HepG2 (cell line): ENCODE measurements at regions of chr22 and their contacts with region 1.

Region 1: DNA sequence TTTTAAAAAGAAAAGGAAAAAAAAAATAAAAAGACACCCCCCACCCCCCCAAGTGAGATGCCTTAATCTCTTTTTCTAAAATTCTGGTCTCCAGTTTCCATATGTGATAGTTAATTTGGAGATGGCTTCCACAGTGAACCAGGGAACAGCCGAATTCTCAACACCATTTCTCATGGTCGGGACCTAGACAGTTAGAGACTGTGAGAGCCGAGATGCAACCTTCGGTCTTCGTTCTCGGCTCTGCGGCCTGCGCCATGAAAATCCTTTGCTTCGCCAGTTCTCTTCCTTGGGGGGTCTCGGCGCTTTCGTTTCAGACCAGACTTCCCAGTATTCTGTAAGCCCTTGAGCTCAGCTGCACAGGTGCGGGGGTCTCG is 723 bp downstream of the CACNG2 start:
- DNase-seq: no peak
- ATAC-seq: no peak
- H3K4me3 ChIP-seq: peak overlapping the region in 1 of 3 experiments; percentile 33; a peak in 1 of 6 replicates
- H3K27ac ChIP-seq: no peak overlapping the region
- H3K4me1 ChIP-seq: no peaks in the 10 kb centered on the region
- H3K27me3 ChIP-seq: peaks cover 2 to 41% of the 10 kb centered on the region in 2 experiments
- CTCF ChIP-seq: no peak
- EP300 ChIP-seq: no peak
- POLR2A ChIP-seq: no peak
- RAD21 ChIP-seq: no peak

Region 2: GRCh38 chr22:36409911-36410756 is 292.7 kb before region 1 on chr22:
- CTCF ChIA-PET with region 1: no interaction called
- POLR2A ChIA-PET with region 1: no interaction called
- in situ Hi-C with region 1: no loop called
- intact Hi-C with region 1: no loop called
- DNase-seq: peak; percentile 97
- ATAC-seq: peak; percentile 94
- H3K4me3 ChIP-seq: peak overlapping the region; percentile 56 to 72 (median 56)
- H3K27ac ChIP-seq: peak overlapping the region; percentile 90
- H3K4me1 ChIP-seq: peaks cover 74% of the 10 kb centered on the region
- H3K27me3 ChIP-seq: no peaks in the 10 kb centered on the region
- CTCF ChIP-seq: no peak
- EP300 ChIP-seq: no peak
- POLR2A ChIP-seq: peak; percentile 83 to 87
- RAD21 ChIP-seq: no peak

Region 3: GRCh38 chr22:36587289-36588154 is 115.3 kb before region 1 on chr22:
- CTCF ChIA-PET with region 1: no interaction called
- POLR2A ChIA-PET with region 1: no interaction called
- in situ Hi-C with region 1: no loop called
- intact Hi-C with region 1: no loop called
- DNase-seq: no peak
- ATAC-seq: no peak
- H3K4me3 ChIP-seq: no peak overlapping the region
- H3K27ac ChIP-seq: no peak overlapping the region
- H3K4me1 ChIP-seq: no peaks in the 10 kb centered on the region
- H3K27me3 ChIP-seq: peaks cover 16 to 76% of the 10 kb centered on the region in 2 experiments
- CTCF ChIP-seq: no peak
- EP300 ChIP-seq: no peak
- POLR2A ChIP-seq: no peak
- RAD21 ChIP-seq: no peak

Region 4: DNA sequence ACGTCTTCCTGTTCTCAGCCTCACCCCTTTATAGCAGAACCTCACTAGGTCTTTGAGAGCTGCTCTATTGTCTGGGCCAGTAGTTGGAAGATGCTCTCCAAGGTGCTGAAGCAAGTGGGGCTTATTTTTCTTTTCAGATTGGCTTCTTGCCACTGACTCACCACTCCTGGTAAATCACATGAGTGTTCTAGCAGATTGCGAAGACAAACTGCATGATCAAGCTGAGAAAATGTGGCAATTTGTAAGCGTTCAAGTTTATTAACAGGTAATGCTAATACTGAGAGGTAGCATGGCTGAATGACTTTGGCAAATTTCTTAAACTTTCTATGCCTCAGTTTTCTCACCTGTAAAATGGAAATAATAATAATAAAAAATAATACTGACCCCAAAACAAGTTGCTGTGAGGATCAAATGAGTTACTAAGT is 58.5 kb before region 1 on chr22:
- CTCF ChIA-PET with region 1: no interaction called
- POLR2A ChIA-PET with region 1: no interaction called
- in situ Hi-C with region 1: no loop called
- intact Hi-C with region 1: loop called (anchors 10 kb)
- DNase-seq: peak; percentile 51
- ATAC-seq: no peak; the same call in 2 of the 3 replicates
- H3K4me3 ChIP-seq: no peak overlapping the region
- H3K27ac ChIP-seq: no peak overlapping the region
- H3K4me1 ChIP-seq: no peaks in the 10 kb centered on the region
- H3K27me3 ChIP-seq: peaks cover 2 to 18% of the 10 kb centered on the region in 2 experiments; a peak in 4 of 5 replicates
- CTCF ChIP-seq: no peak
- EP300 ChIP-seq: no peak
- POLR2A ChIP-seq: no peak
- RAD21 ChIP-seq: no peak

Region 5: GRCh38 chr22:36659762-36660509 is 42.9 kb before region 1 on chr22:
- CTCF ChIA-PET with region 1: no interaction called
- POLR2A ChIA-PET with region 1: no interaction called
- in situ Hi-C with region 1: no loop called
- intact Hi-C with region 1: no loop called
- DNase-seq: peak; percentile 91
- ATAC-seq: peak; percentile 93
- H3K4me3 ChIP-seq: peak overlapping the region in 2 of 3 experiments; percentile 35 to 70; a peak in 3 of 6 replicates
- H3K27ac ChIP-seq: peak overlapping the region; percentile 63
- H3K4me1 ChIP-seq: peaks cover 40% of the 10 kb centered on the region
- H3K27me3 ChIP-seq: peaks cover 0 to 11% of the 10 kb centered on the region in 2 experiments; a peak in 3 of 5 replicates
- CTCF ChIP-seq: no peak
- EP300 ChIP-seq: peak in 1 of 2 experiments; percentile 50; a peak in 2 of 4 replicates
- POLR2A ChIP-seq: no peak
- RAD21 ChIP-seq: no peak

Region 6: DNA sequence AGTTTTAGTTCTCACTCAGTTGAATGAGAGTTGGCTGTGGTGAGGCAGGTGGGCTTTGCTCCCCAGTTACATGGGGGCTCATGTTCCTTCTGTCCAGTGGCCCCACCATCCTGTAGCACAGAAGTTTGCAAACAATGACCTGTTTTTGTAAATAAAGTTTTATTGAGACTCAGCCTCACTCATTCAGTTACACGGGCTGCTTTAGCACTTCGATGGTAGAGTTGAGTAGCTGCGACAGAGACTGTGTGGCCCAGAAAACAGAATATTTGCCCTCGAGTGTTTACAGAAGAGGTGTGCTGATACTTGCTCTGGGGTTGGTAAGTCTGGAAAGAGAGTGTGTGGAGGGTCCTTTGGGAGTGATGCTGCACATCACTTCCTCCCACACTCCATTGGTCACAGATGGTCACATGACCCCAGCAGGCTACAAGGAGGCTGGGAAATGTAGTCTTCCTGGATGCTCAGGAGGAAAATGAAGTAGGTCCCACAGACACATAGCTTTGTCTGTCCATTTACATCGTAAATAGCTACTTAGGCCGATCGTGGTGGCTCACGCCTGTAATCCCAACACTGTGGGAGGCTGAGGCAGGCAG is 38.5 kb after region 1 on chr22:
- CTCF ChIA-PET with region 1: no interaction called
- POLR2A ChIA-PET with region 1: no interaction called
- in situ Hi-C with region 1: no loop called
- intact Hi-C with region 1: no loop called
- DNase-seq: no peak
- ATAC-seq: no peak
- H3K4me3 ChIP-seq: no peak overlapping the region
- H3K27ac ChIP-seq: no peak overlapping the region
- H3K4me1 ChIP-seq: no peaks in the 10 kb centered on the region
- H3K27me3 ChIP-seq: peaks cover 10 to 29% of the 10 kb centered on the region in 2 experiments; a peak in 4 of 5 replicates
- CTCF ChIP-seq: no peak
- EP300 ChIP-seq: no peak
- POLR2A ChIP-seq: no peak
- RAD21 ChIP-seq: no peak